GM12878 (cell line): ENCODE measurements at regions of chr4 and their contacts with region 1.

Region 1: GRCh38 chr4:158817562-158818296 is 48.9 kb downstream of the FNIP2 start:
- DNase-seq: peak; percentile 64
- ATAC-seq: peak; percentile 66
- H3K4me3 ChIP-seq: no peak overlapping the region
- H3K27ac ChIP-seq: 0 out of 2 replicates have a peak overlapping the region, but pooled peaks have one; percentile 45
- H3K4me1 ChIP-seq: peaks cover 2% of the 10 kb centered on the region; the same call in 1 of the 2 replicates
- H3K27me3 ChIP-seq: no peaks in the 10 kb centered on the region
- CTCF ChIP-seq: no peak
- EP300 ChIP-seq: peak in 1 of 2 experiments; percentile 38; a peak in 1 of 4 replicates
- POLR2A ChIP-seq: no peak
- RAD21 ChIP-seq: no peak

Region 2: DNA sequence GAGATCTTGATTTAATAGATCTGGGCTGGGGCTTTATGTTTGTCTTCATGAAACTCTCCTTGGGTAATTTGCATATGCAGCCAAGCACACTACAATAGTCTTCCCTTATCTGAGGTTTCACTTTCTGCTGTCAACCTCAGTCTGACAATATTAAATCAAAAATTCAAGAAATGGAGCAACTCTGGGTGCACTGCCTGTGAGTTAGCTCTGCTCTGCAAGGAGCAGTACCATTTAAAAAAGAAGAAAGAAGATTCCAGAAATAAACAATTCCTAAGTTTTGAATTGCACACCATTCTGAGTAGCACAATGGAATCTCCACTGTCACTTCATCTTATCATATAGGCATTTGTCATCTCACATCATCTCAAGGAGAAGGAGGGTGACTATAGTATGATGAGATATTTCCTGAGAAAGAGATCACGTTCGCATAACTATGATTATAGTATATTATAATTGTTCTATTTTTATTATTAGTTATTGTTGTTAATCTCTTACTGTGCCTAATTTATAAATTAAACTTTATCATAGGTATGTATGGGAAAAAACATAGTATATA is 39.5 kb before region 1 on chr4:
- CTCF ChIA-PET with region 1: interaction called, 8 read pairs
- POLR2A ChIA-PET with region 1: interaction called, 3 read pairs
- RAD21 ChIA-PET with region 1: interaction called, 5 read pairs
- SMC1A ChIA-PET with region 1: interaction called, 291 read pairs
- in situ Hi-C with region 1: no loop called
- intact Hi-C with region 1: no loop called
- DNase-seq: peak; percentile 60
- ATAC-seq: peak; percentile 96
- H3K4me3 ChIP-seq: no peak overlapping the region
- H3K27ac ChIP-seq: no peak overlapping the region
- H3K4me1 ChIP-seq: peaks cover 10% of the 10 kb centered on the region; the same call in 1 of the 2 replicates
- H3K27me3 ChIP-seq: 0 out of 4 replicates have a peak, but pooled peaks cover 0 to 2% of the 10 kb centered on the region in 2 experiments
- CTCF ChIP-seq: no peak
- EP300 ChIP-seq: no peak
- POLR2A ChIP-seq: no peak
- RAD21 ChIP-seq: no peak